ENCODE measurements at regions of chr20 and their contacts with region 1.

Region 1: GRCh38 chr20:17898548-17898994 is 70.0 kb downstream of the SNX5 start:
- DNase-seq: peak; percentile 83
- H3K4me3 ChIP-seq: no peak overlapping the region
- H3K27ac ChIP-seq: no peak overlapping the region
- H3K4me1 ChIP-seq: no peaks in the 10 kb centered on the region
- H3K27me3 ChIP-seq: no peaks in the 10 kb centered on the region
- CTCF ChIP-seq: peak; percentile 94

Region 2: GRCh38 chr20:17504898-17505635 is 393.5 kb before region 1 on chr20:
- intact Hi-C with region 1: loop called (anchors 10 kb)
- DNase-seq: peak; percentile 67
- H3K4me3 ChIP-seq: peak overlapping the region; percentile 50
- H3K27ac ChIP-seq: peak overlapping the region; percentile 21
- H3K4me1 ChIP-seq: no peaks in the 10 kb centered on the region
- H3K27me3 ChIP-seq: no peaks in the 10 kb centered on the region
- CTCF ChIP-seq: peak; percentile 56

Region 3: GRCh38 chr20:17525650-17526049 is 372.9 kb before region 1 on chr20:
- intact Hi-C with region 1: loop called (anchors 5 kb)
- DNase-seq: peak; percentile 40
- H3K4me3 ChIP-seq: no peak overlapping the region
- H3K27ac ChIP-seq: no peak overlapping the region
- H3K4me1 ChIP-seq: no peaks in the 10 kb centered on the region
- H3K27me3 ChIP-seq: no peaks in the 10 kb centered on the region
- CTCF ChIP-seq: no peak

Region 4: DNA sequence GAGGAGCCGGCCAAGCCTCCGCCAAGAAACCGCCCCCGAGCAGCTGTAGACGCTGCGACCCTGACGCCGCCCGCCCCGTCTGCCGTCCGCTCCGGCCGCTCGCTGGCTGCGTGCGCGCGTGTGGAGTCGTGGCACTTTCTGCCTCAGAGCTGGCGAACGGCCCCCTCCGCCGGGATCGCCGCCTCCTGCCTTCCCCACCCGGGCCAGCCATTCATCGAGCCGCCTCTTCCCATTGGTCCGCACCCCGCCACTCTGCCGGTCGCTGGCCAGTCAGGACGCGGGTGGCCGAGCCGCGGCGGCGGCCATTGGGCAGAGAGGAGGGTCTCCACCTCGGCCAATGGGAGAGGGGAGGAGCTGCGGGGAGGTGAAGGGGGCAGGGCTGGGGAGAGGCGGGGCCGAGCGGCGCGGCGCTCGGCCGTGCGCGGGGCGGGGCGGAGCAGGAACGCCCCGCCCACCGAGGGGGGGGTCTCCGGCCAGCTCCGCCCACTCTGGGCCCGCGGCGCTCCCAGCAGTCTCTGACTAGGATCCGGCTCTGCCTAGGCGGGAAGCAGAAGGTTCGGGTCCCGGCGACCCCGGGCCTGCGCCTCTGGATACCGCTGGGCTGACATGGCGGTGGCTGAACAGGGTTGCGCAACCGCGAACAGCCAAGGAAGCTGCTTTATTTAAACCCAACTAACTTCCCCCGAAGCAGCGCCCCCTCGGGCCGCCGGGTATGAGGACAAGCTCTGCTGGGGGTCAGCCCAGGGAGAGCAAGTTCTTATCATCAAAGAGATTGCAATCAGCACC is 216.3 kb before region 1 on chr20 and contains the start of gene RRBP1:
- intact Hi-C with region 1: loop called (anchors 5 kb)
- DNase-seq: peak; percentile 98
- H3K4me3 ChIP-seq: peak within 1 kb of the TSS; percentile 74
- H3K27ac ChIP-seq: peak within 1 kb of the TSS; percentile 90
- H3K4me1 ChIP-seq: peaks cover 17% of the 10 kb centered on the region
- H3K27me3 ChIP-seq: no peaks in the 10 kb centered on the region
- CTCF ChIP-seq: peak; percentile 66
- total RNA-seq, gene RRBP1: 402 to 509 TPM

Region 5: GRCh38 chr20:18372296-18372695 is 473.7 kb after region 1 on chr20:
- intact Hi-C with region 1: no loop called
- DNase-seq: no peak
- H3K4me3 ChIP-seq: no peak overlapping the region
- H3K27ac ChIP-seq: no peak overlapping the region
- H3K4me1 ChIP-seq: no peaks in the 10 kb centered on the region
- H3K27me3 ChIP-seq: no peaks in the 10 kb centered on the region
- CTCF ChIP-seq: no peak

Measured in colonic mucosa (tissue), 4 donors.